CD4-positive, alpha-beta T cell (primary cell): ENCODE measurements at regions of chr3 and their contacts with region 1.

Region 1: GRCh38 chr3:160486459-160486869 is 36.9 kb upstream of the TRIM59 start:
- DNase-seq: peak in 4 of 14 experiments; percentile 16 to 61 (median 45)
- ATAC-seq: no peak
- H3K4me3 ChIP-seq: no peak overlapping the region
- H3K4me3 Mint-ChIP-seq: peak overlapping the region; percentile 72
- H3K27ac ChIP-seq: no peak overlapping the region
- H3K27ac Mint-ChIP-seq: no peak overlapping the region
- H3K4me1 ChIP-seq: peaks cover 3% of the 10 kb centered on the region
- H3K4me1 Mint-ChIP-seq: peaks cover 9% of the 10 kb centered on the region
- H3K27me3 ChIP-seq: peaks cover 0 to 3% of the 10 kb centered on the region in 2 experiments
- H3K27me3 Mint-ChIP-seq: peaks cover 10% of the 10 kb centered on the region
- CTCF ChIP-seq: peak; percentile 78

Region 2: DNA sequence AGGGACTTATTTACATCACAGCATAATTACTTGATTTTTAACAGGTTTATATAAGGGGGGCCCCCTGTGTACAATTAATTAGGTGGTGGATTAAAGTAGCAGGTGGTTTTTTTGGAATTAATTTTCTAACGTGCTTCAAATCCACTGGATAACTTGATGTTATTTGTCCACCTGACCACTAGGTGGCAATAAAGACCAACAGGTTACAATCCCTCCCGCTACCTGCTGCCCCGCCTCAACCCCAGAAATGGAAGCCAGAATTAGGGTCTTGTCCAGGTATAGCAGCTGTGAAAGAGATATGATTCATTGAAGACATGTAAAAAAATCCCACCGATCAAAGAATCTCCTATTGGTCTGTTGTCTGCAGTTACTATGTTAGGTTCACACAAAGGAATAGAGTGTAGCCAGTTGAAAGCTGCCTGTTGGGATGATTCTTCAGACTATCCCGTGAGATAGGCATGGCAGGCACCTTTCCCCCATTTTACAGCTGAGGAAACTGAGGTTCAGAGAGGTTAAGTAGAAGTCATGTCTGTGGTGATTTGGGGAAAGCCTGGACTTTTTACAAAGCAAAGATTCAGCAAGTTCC is 1640.6 kb before region 1 on chr3:
- CTCF ChIA-PET with region 1: no interaction called
- POLR2A ChIA-PET with region 1: no interaction called
- intact Hi-C with region 1: loop called (anchors 5 kb)
- DNase-seq: peak in 8 of 14 experiments; percentile 5 to 64 (median 28)
- ATAC-seq: no peak
- H3K4me3 ChIP-seq: no peak overlapping the region
- H3K4me3 Mint-ChIP-seq: no peak overlapping the region
- H3K27ac ChIP-seq: no peak overlapping the region
- H3K27ac Mint-ChIP-seq: no peak overlapping the region
- H3K4me1 ChIP-seq: peaks cover 3% of the 10 kb centered on the region
- H3K4me1 Mint-ChIP-seq: peaks cover 3% of the 10 kb centered on the region
- H3K27me3 ChIP-seq: no peaks in the 10 kb centered on the region
- H3K27me3 Mint-ChIP-seq: peaks cover 6% of the 10 kb centered on the region
- CTCF ChIP-seq: peak; percentile 93

Region 3: GRCh38 chr3:159260049-159260662 is 1226.3 kb before region 1 on chr3:
- CTCF ChIA-PET with region 1: no interaction called
- POLR2A ChIA-PET with region 1: no interaction called
- intact Hi-C with region 1: loop called in 1 of 2 experiments (anchors 10 kb)
- DNase-seq: peak in 8 of 14 experiments; percentile 2 to 57 (median 22)
- ATAC-seq: no peak
- H3K4me3 ChIP-seq: no peak overlapping the region
- H3K4me3 Mint-ChIP-seq: no peak overlapping the region
- H3K27ac ChIP-seq: no peak overlapping the region
- H3K27ac Mint-ChIP-seq: no peak overlapping the region
- H3K4me1 ChIP-seq: no peaks in the 10 kb centered on the region
- H3K4me1 Mint-ChIP-seq: no peaks in the 10 kb centered on the region
- H3K27me3 ChIP-seq: no peaks in the 10 kb centered on the region
- H3K27me3 Mint-ChIP-seq: peaks cover 20% of the 10 kb centered on the region
- CTCF ChIP-seq: peak; percentile 74

Region 4: GRCh38 chr3:159884661-159885402 is 601.6 kb before region 1 on chr3:
- CTCF ChIA-PET with region 1: interaction called, 4 read pairs
- POLR2A ChIA-PET with region 1: no interaction called
- intact Hi-C with region 1: loop called in 1 of 2 experiments (anchors 2 kb)
- DNase-seq: peak in 3 of 14 experiments; percentile 17 to 42 (median 35)
- ATAC-seq: peak; percentile 37
- H3K4me3 ChIP-seq: no peak overlapping the region
- H3K4me3 Mint-ChIP-seq: no peak overlapping the region
- H3K27ac ChIP-seq: no peak overlapping the region
- H3K27ac Mint-ChIP-seq: no peak overlapping the region
- H3K4me1 ChIP-seq: no peaks in the 10 kb centered on the region
- H3K4me1 Mint-ChIP-seq: no peaks in the 10 kb centered on the region
- H3K27me3 ChIP-seq: no peaks in the 10 kb centered on the region
- H3K27me3 Mint-ChIP-seq: peaks cover 5% of the 10 kb centered on the region
- CTCF ChIP-seq: peak; percentile 28

Region 5: GRCh38 chr3:160027541-160028195 is 458.8 kb before region 1 on chr3:
- CTCF ChIA-PET with region 1: no interaction called
- POLR2A ChIA-PET with region 1: no interaction called
- intact Hi-C with region 1: loop called in 1 of 2 experiments (anchors 5 kb)
- DNase-seq: peak in 1 of 14 experiments; percentile 15
- ATAC-seq: no peak
- H3K4me3 ChIP-seq: no peak overlapping the region
- H3K4me3 Mint-ChIP-seq: no peak overlapping the region
- H3K27ac ChIP-seq: no peak overlapping the region
- H3K27ac Mint-ChIP-seq: no peak overlapping the region
- H3K4me1 ChIP-seq: peaks cover 2% of the 10 kb centered on the region
- H3K4me1 Mint-ChIP-seq: no peaks in the 10 kb centered on the region
- H3K27me3 ChIP-seq: no peaks in the 10 kb centered on the region
- H3K27me3 Mint-ChIP-seq: no peaks in the 10 kb centered on the region
- CTCF ChIP-seq: no peak

Region 6: DNA sequence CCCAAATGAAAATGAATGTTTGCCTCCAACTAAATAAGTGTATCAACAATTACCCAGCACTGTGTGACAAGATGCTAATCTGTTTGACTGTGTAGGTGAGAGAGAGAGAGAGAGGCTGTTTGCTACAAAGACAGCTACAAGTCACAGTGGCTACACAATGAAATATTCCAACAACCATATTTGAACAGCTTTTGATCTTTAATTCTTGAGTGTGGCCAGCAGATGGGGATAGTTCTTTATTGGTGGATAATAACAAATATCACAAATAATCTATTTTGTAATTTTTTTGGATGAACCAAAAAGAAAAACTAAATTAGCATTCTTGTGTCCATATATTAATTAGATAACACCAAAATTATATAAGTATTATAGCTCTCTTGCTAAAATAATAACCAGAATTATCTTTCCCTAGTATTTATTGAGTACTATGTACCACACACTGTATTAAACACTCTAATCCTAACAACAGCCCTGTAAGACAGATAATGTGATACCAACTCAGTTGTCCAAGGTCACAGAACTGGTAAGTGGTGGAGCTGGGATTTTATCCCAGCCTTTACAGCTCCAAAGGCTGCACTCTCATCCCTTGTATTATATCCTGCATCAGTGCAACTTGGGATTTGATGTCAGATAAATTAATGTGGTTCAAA is 323.1 kb before region 1 on chr3:
- CTCF ChIA-PET with region 1: interaction called, 3 read pairs
- POLR2A ChIA-PET with region 1: no interaction called
- intact Hi-C with region 1: loop called (anchors 2 to 10 kb)
- DNase-seq: peak in 3 of 14 experiments; percentile 23 to 28 (median 23)
- ATAC-seq: no peak
- H3K4me3 ChIP-seq: no peak overlapping the region
- H3K4me3 Mint-ChIP-seq: no peak overlapping the region
- H3K27ac ChIP-seq: no peak overlapping the region
- H3K27ac Mint-ChIP-seq: no peak overlapping the region
- H3K4me1 ChIP-seq: no peaks in the 10 kb centered on the region
- H3K4me1 Mint-ChIP-seq: no peaks in the 10 kb centered on the region
- H3K27me3 ChIP-seq: no peaks in the 10 kb centered on the region
- H3K27me3 Mint-ChIP-seq: peaks cover 5% of the 10 kb centered on the region
- CTCF ChIP-seq: peak; percentile 47